Posterior cingulate gyrus (tissue), 11 donors: ENCODE measurements at regions of chr10 and their contacts with region 1.

Region 1: GRCh38 chr10:122342293-122343134 is 32.0 kb upstream of the PLEKHA1 start:
- DNase-seq: peak in 5 of 10 donors; percentile 26 to 62 (median 60)

Region 2: DNA sequence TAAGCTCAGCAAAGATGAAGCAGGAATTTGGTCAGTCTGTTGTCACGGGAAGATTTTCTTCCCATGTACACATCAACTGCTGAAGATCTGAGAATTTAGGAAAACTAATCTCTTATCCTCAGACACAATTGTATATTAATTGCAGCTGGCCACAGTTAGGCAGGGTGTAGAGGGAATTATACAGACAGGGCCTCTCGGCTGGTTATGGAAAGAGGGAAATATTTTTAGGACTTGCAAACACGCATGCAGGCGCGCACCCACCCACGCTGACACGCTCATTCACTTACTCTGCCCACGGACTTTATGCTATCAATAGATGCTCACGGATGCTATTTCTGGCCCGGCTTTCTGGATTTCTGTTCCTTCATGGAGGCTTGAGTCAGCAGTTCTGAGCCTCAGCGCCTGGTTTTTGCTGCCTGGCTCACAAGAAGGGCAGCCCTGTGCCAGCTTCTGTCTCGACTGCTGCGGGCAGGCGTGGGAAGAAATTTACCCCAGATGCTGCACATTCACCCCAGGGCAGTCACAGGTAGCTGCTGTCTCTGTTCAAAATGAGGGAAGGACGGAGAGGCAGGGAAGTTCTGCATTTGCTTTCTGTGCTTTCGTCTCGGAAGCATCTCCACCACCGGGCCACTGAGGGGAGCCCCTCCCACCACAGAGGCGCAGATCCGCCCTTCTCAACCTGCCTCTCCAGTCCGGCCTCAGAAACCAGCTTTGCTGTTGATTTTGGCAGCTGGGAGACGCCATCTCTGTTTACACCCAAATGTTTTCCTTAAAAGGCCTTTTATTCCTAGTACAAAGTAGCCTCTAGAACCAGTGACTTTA is 187.8 kb before region 1 on chr10:
- intact Hi-C with region 1: no loop called
- DNase-seq: peak in 9 of 10 donors; percentile 39 to 97 (median 72)

Region 3: GRCh38 chr10:122298598-122299301 is 43.8 kb before region 1 on chr10:
- intact Hi-C with region 1: loop called (anchors 5 kb)
- DNase-seq: peak; percentile 43 to 96 (median 78)

Region 4: DNA sequence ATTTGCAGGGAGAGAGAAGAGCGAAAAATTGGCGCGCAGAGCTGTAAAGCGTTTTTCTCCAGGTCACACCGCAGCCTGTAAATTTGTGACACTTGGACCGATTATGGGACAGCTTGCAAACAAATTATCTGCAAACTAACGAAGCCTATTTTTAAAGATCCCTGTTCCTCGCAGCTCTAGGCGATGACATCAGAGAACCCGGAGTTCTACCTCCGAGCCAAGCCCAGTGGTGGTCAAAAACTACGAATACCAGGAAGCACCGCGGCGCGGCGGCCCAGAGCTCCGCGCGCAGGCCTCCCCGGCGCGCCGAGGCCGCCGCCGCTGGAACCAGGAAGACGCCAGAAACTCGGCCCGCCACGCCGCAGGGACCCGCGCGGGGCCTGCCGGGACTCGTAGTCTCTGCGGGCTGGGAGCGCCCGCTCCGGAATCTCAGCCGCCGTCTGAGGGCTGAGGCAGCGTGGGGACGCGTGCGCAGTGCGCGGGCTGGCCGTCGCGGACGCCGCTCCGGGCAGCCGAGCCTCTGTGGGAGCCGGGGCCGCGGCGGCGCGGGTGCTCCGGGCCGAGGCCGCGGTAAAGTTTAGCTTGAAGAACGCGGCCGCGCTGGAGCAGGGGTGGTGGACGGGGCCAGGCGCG is 31.8 kb after region 1 on chr10 and contains the start of gene PLEKHA1:
- intact Hi-C with region 1: no loop called
- DNase-seq: peak; percentile 91 to 99 (median 94)

Region 5: GRCh38 chr10:122435212-122435827 is 92.8 kb after region 1 on chr10:
- intact Hi-C with region 1: loop called (anchors 2 kb)
- DNase-seq: no peak

Region 6: DNA sequence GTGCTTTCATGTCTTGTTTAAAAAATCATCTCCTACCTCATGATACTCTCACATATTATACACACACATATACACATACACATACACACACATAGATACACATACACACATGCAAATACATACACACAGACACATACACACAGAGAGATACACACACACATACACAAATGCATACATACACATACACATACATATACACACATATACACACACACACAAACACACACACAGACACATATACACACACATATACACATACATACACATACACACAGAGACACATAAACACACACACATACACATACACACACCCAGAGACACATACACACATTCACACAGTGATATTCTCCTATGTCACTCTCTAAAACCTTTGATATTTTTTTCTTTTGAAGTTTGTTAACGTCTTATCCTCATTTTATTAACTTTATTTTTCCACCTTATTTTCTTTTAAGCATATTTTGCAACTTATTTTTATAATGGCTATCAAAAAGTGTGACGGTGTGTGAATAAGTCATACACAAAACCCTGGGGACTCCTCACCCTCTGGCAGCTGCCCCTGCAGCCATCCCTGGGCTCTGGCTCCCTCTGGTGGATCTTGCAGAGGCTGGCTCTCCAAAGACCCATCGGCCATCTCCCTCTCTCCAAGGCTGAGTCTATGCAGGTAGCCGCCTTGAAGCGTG is 361.1 kb after region 1 on chr10:
- intact Hi-C with region 1: loop called (anchors 5 kb)
- DNase-seq: peak; percentile 54 to 98 (median 83)

Region 7: DNA sequence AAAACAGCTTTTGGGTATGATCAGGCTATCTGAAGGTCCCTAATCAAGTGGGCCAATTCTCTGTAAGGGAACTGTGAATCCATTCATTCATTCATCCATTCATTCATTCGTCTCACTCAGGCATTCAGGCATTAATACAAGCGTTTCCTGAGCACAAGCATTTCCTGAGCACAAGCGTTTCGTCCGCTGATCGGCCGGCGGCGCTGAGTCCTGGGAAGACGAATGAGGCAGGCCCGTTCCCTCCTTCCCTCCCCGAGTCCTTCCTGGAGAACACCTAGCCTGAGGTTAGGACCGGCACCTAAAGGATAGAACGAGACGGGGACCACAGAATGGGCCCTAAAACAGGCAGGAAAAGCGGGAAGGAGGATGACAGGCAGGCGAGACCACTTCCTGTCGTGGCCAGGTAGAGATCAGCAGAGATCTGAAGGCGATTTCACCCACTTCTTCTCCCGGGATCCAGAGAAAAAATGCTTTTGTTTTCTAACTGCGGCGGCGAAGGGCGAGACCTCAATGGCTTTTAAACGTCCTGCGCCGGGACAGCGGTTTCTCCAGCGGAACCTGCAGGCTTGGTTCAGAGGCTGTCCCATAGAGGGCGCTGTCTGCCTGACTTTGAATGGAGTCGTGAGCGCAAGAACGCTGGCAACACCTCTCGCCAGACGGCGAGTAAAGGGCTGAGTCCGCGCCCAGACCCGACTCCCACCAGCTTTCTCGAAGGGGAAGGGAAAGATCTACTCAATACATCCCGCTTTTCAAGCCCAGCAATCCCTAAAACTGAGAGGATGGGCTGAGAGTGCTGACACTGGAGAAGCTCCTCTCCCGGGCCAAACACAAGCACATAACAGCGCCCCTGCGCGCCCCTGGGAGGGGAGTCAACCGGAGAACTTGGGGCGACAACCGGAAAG is 790.3 kb after region 1 on chr10:
- intact Hi-C with region 1: no loop called
- DNase-seq: peak; percentile 56 to 96 (median 86)